ENCODE measurements at regions of chr5 and their contacts with region 1.

Region 1: GRCh38 chr5:168291464-168291961 is at the start of gene WWC1:
- DNase-seq: peak; percentile 62
- ATAC-seq: peak; percentile 90
- H3K4me3 Mint-ChIP-seq: peak within 1 kb of the TSS; percentile 73
- H3K27ac Mint-ChIP-seq: no peak within 1 kb of the TSS
- H3K4me1 Mint-ChIP-seq: peaks cover 25% of the 10 kb centered on the region
- H3K27me3 Mint-ChIP-seq: peaks cover 16% of the 10 kb centered on the region
- CTCF ChIP-seq: no peak
- total RNA-seq, gene WWC1: 1.3 and 2.0 TPM in 2 replicates

Region 2: DNA sequence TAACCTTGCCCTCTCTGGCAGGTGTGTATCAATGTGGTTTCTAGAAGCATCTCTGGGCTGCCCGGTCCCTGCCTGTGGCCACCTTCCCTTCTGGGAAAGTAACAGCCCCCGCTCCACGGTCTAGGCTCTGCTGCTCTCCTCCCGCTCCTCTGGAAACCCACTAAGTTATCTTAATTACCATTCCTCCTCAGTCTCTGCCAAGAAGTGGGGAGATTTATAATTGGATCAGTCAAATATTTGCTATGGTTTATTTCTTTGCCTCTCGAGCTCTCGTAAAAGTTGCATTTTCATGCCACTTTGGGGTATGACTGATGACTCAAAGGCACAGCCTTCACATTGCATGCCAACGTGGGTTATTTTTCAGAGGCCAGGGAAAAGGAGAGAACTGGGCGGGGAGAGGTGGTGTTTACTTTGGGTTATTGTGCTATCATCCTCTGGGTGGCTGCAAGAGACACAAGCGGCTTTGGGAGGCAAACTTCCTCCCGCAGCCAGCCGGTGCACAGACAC is 205.4 kb before region 1 on chr5:
- CTCF ChIA-PET with region 1: no interaction called
- POLR2A ChIA-PET with region 1: no interaction called
- intact Hi-C with region 1: no loop called
- DNase-seq: no peak
- ATAC-seq: no peak
- H3K4me3 Mint-ChIP-seq: no peak overlapping the region
- H3K27ac Mint-ChIP-seq: no peak overlapping the region
- H3K4me1 Mint-ChIP-seq: no peaks in the 10 kb centered on the region
- H3K27me3 Mint-ChIP-seq: no peaks in the 10 kb centered on the region
- CTCF ChIP-seq: no peak

Region 3: DNA sequence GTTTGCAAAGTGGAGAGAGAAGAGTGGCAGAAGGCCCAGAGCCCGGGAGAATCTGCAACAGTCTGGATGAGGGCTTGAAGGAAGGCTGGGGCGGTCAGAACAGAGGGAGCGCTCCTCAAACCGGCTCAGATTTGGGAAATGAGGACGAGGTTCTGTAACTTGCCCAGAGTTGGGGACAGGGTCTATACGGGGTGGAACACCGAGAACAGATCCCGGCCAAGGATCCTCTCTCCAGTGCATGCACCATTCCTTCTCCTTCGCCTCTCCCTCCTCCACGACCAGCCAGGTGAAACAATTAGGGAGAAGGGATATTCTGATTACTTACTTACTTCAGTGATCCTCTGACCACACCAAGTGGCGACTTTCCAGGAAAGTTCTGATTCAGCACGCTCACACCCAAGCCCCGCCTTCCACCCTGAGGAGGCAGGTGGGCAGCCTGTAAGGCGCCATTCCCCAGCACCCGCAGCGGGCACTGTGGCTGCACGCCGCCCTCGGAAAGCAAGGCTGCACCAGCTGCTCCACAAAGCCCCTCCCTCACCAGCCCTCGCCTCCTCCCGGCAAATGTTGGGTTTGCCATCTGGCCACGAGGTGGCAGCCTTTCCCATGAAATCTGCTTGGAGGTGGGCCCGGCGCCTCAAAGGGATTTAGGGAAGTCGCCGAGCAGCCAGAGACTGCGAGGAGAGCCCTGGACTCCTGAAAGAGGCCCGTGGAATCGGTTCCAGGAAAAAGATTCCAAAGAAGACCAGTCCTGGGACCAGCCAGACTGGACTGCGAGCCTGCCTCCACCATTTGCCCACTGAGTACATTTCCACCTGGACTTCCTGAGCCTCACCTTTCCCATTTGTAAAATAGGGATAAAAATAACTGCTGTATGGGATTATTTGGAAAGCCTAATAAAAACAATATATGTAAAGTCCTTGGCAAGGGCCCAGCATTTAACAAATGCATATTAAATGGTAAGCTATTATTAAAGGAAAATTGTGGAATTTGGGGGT is 22.3 kb before region 1 on chr5:
- CTCF ChIA-PET with region 1: interaction called, 4 read pairs
- POLR2A ChIA-PET with region 1: no interaction called
- intact Hi-C with region 1: loop called (anchors 2 kb)
- DNase-seq: peak; percentile 55
- ATAC-seq: peak; percentile 70
- H3K4me3 Mint-ChIP-seq: peak overlapping the region; percentile 45
- H3K27ac Mint-ChIP-seq: no peak overlapping the region
- H3K4me1 Mint-ChIP-seq: peaks cover 9% of the 10 kb centered on the region
- H3K27me3 Mint-ChIP-seq: peaks cover 25% of the 10 kb centered on the region
- CTCF ChIP-seq: peak; percentile 59

Region 4: GRCh38 chr5:168372356-168372946 is 80.9 kb after region 1 on chr5:
- CTCF ChIA-PET with region 1: no interaction called
- POLR2A ChIA-PET with region 1: no interaction called
- intact Hi-C with region 1: no loop called
- DNase-seq: no peak
- ATAC-seq: no peak
- H3K4me3 Mint-ChIP-seq: no peak overlapping the region
- H3K27ac Mint-ChIP-seq: no peak overlapping the region
- H3K4me1 Mint-ChIP-seq: peaks cover 4% of the 10 kb centered on the region
- H3K27me3 Mint-ChIP-seq: no peaks in the 10 kb centered on the region
- CTCF ChIP-seq: no peak

Region 5: DNA sequence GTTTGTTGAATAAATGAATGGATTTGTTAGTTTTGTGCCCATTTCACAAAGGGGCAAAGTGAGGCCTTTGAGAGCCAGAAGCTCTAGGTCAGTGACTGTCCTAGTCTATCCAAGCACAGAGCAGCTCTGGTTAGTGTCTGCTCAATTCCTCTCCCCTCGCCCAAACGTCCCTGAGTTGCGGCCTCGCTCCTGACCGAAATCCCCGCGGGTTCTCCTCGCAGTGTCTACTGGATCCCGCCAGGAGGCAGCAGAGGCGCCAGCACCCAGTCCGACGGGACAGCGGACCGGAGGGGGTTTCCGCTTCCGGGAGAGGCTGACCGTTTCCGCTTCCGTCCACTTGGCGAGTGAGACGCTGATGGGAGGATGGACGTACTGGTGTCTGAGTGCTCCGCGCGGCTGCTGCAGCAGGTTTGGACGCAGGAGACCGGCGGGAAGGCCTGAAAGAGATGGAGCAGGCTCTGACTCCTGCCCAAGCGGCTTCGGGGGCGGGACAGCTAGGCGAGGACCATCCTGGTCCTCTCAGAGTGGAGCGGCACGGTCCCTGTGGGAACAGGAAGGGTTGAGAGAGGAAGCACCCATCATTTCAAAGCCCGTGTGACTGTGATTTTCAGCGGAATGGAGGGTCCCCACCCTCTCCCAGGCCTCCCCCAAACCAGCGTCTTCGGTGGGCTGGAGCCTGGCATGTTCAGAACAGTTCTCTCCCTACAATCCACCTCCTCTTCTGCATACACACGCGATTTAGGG is 194.8 kb after region 1 on chr5 and contains the start of gene RARS1:
- CTCF ChIA-PET with region 1: interaction called, 4 read pairs
- POLR2A ChIA-PET with region 1: no interaction called
- intact Hi-C with region 1: loop called (anchors 1 kb)
- DNase-seq: peak; percentile 82
- ATAC-seq: peak; percentile 94
- H3K4me3 Mint-ChIP-seq: peak within 1 kb of the TSS; percentile 100
- H3K27ac Mint-ChIP-seq: peak within 1 kb of the TSS; percentile 89
- H3K4me1 Mint-ChIP-seq: peaks cover 30% of the 10 kb centered on the region
- H3K27me3 Mint-ChIP-seq: peaks cover 3% of the 10 kb centered on the region
- CTCF ChIP-seq: peak; percentile 73
- total RNA-seq, gene RARS1: 75.9 and 85.9 TPM in 2 replicates

Region 6: GRCh38 chr5:168579488-168580226 is 288.1 kb after region 1 on chr5:
- CTCF ChIA-PET with region 1: no interaction called
- POLR2A ChIA-PET with region 1: no interaction called
- intact Hi-C with region 1: loop called (anchors 1 kb)
- DNase-seq: peak; percentile 96
- ATAC-seq: peak; percentile 95
- H3K4me3 Mint-ChIP-seq: peak overlapping the region; percentile 84
- H3K27ac Mint-ChIP-seq: peak overlapping the region; percentile 95
- H3K4me1 Mint-ChIP-seq: peaks cover 48% of the 10 kb centered on the region
- H3K27me3 Mint-ChIP-seq: no peaks in the 10 kb centered on the region
- CTCF ChIP-seq: no peak

Measured in activated B cell treated with CpG ODN at 0.5 μM for 24 hours (primary cell).